Posterior vena cava (tissue), 2 donors: ENCODE measurements at regions of chr7 and their contacts with region 1.

Region 1: GRCh38 chr7:38656968-38657367 is 25.8 kb upstream of the AMPH start:
- DNase-seq: no peak

Region 2: DNA sequence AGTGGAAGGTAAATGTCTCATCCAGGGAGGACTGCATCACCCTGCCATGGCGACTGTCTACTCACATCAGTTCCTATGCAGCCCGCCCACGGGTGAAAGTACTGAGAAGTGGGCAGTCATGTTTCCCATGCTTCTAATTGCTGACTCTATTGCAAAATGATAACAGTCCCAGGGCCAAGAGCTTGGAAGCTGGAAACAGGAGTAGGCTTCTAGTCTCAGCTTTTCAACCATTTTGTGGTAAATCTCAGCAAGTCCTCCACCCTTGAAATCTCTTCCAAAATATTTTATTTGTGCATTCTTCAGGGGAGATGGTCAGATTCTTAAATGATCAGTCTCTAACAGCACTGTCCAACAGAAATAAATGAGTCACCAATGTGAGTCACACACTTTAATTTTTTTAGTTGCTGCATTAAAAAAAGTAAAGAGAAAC is 335.4 kb before region 1 on chr7:
- intact Hi-C with region 1: no loop called
- DNase-seq: no peak

Region 3: DNA sequence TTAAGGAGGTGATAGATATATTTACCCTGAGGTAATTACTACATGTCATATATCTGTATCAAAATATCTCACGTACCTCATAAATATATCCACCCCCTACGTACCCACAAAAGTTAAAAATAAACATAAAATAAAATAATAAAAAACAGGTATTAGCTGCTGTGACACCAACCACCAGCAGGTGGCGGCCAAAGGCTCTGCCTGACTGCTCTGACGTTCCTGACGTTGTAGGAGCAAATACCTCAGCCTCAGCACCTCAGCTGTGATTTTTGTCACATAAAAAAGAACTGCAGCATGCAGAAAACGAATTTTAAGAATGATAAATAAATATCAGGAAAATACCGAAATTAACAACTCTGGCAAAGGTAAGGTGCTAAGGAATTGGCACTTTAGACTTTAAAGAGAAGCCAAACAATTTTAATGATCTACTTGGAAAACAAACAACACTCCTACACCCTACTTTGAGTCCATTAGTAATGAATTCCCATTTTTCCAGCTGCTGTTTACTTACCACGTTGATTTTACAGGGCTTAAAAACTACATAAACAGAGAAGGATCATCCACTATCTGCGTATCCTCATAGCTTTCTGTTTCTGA is 258.1 kb before region 1 on chr7:
- intact Hi-C with region 1: loop called in 1 of 2 experiments (anchors 5 kb)
- DNase-seq: peak; percentile 88

Region 4: GRCh38 chr7:38929460-38930171 is 272.6 kb after region 1 on chr7:
- intact Hi-C with region 1: no loop called
- DNase-seq: no peak

Region 5: DNA sequence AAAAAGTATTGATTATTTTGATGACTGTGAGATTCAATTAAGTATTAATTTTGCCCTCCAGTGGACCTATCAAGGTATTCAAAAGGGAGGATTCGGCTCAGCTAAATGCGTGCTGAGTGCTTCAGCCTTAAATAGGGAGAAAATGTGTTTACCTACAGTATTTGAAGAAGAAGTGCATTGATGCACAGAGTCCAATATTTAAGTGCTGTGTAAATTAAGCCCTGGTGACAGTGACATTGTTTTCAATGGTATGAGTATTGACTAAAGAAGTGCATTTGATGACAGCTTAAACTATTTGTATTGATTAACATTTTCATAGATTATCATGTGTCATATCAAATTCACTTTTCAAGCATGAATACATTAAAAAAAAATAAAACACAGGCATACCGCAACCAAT is 427.4 kb after region 1 on chr7:
- intact Hi-C with region 1: loop called in 1 of 2 experiments (anchors 5 kb)
- DNase-seq: no peak